CD4-positive, alpha-beta T cell (primary cell): ENCODE measurements at regions of chr20 and their contacts with region 1.

Region 1: DNA sequence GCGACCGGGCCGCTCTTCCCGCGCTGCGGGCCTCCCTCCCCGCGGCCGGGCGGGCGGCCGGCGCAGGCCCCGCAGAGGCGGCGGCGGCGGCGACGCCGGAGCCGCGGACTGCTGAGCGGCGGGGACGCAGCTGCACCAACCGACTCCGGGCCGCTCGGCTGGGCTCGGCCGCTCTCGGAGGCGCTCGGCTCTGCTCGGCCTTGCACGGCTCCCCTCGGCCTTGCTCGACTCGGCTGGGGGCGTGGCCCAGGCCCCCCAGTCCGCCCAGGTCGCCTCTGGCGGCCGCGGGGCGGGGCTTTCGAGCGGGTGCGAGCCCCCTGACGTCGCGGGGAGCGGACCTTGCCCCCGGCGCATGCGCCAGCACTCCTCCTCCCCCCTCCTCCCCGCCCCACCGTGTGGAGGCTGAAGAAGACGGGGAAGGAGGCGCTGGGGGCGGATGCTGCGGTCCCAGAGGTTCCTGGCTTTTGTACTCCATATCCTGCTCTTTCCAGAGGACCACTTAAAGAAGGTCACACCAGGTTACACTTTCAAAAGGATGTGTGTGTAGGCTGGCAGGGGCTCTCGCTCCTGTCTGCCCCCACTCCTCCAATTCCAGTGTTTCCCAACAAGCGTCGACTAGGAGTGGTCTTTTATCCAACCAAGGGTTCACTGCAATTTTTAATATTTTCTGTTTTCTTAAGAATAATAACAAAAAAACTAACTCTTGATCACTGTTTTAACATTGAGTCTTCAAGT is at the start of gene ZHX3:
- DNase-seq: peak; percentile 84 to 98 (median 96)
- ATAC-seq: peak; percentile 93
- H3K4me3 ChIP-seq: peak within 1 kb of the TSS; percentile 77
- H3K4me3 Mint-ChIP-seq: peak within 1 kb of the TSS; percentile 90
- H3K27ac ChIP-seq: peak within 1 kb of the TSS; percentile 38 to 57
- H3K27ac Mint-ChIP-seq: peak within 1 kb of the TSS; percentile 75
- H3K4me1 ChIP-seq: peaks cover 13% of the 10 kb centered on the region
- H3K4me1 Mint-ChIP-seq: peaks cover 38% of the 10 kb centered on the region
- H3K27me3 ChIP-seq: no peaks in the 10 kb centered on the region
- H3K27me3 Mint-ChIP-seq: no peaks in the 10 kb centered on the region
- CTCF ChIP-seq: no peak
- total RNA-seq, gene ZHX3: 6.6 to 7.6 TPM

Region 2: GRCh38 chr20:41136680-41137613 is 180.8 kb before region 1 on chr20 and contains the start of gene PLCG1:
- CTCF ChIA-PET with region 1: no interaction called
- POLR2A ChIA-PET with region 1: interaction called, 4 read pairs
- intact Hi-C with region 1: loop called in 1 of 2 experiments (anchors 1 kb)
- DNase-seq: peak; percentile 66 to 92 (median 82)
- ATAC-seq: peak; percentile 68
- H3K4me3 ChIP-seq: peak within 1 kb of the TSS; percentile 90
- H3K4me3 Mint-ChIP-seq: peak within 1 kb of the TSS; percentile 95
- H3K27ac ChIP-seq: peak within 1 kb of the TSS; percentile 75 to 83
- H3K27ac Mint-ChIP-seq: peak within 1 kb of the TSS; percentile 96
- H3K4me1 ChIP-seq: peaks cover 59% of the 10 kb centered on the region
- H3K4me1 Mint-ChIP-seq: peaks cover 69% of the 10 kb centered on the region
- H3K27me3 ChIP-seq: no peaks in the 10 kb centered on the region
- H3K27me3 Mint-ChIP-seq: no peaks in the 10 kb centered on the region
- CTCF ChIP-seq: no peak
- total RNA-seq, gene PLCG1: 387 to 404 TPM

Region 3: GRCh38 chr20:41232973-41233926 is 84.5 kb before region 1 on chr20:
- CTCF ChIA-PET with region 1: interaction called, 4 read pairs
- POLR2A ChIA-PET with region 1: interaction called, 3 read pairs
- intact Hi-C with region 1: loop called in 1 of 2 experiments (anchors 5 kb)
- DNase-seq: no peak
- ATAC-seq: no peak
- H3K4me3 ChIP-seq: no peak overlapping the region
- H3K4me3 Mint-ChIP-seq: no peak overlapping the region
- H3K27ac ChIP-seq: no peak overlapping the region
- H3K27ac Mint-ChIP-seq: no peak overlapping the region
- H3K4me1 ChIP-seq: peaks cover 11% of the 10 kb centered on the region
- H3K4me1 Mint-ChIP-seq: peaks cover 26% of the 10 kb centered on the region
- H3K27me3 ChIP-seq: no peaks in the 10 kb centered on the region
- H3K27me3 Mint-ChIP-seq: no peaks in the 10 kb centered on the region
- CTCF ChIP-seq: no peak

Region 4: GRCh38 chr20:41299899-41300298 is 17.8 kb before region 1 on chr20:
- CTCF ChIA-PET with region 1: no interaction called
- POLR2A ChIA-PET with region 1: no interaction called
- intact Hi-C with region 1: no loop called
- DNase-seq: no peak
- ATAC-seq: no peak
- H3K4me3 ChIP-seq: no peak overlapping the region
- H3K4me3 Mint-ChIP-seq: no peak overlapping the region
- H3K27ac ChIP-seq: no peak overlapping the region
- H3K27ac Mint-ChIP-seq: no peak overlapping the region
- H3K4me1 ChIP-seq: no peaks in the 10 kb centered on the region
- H3K4me1 Mint-ChIP-seq: no peaks in the 10 kb centered on the region
- H3K27me3 ChIP-seq: no peaks in the 10 kb centered on the region
- H3K27me3 Mint-ChIP-seq: no peaks in the 10 kb centered on the region
- CTCF ChIP-seq: no peak

Region 5: GRCh38 chr20:41339507-41340326 is 22.0 kb after region 1 on chr20:
- CTCF ChIA-PET with region 1: interaction called, 3 read pairs
- POLR2A ChIA-PET with region 1: no interaction called
- intact Hi-C with region 1: loop called in 1 of 2 experiments (anchors 2 kb)
- DNase-seq: peak; percentile 73 to 91 (median 83)
- ATAC-seq: peak; percentile 95
- H3K4me3 ChIP-seq: peak overlapping the region; percentile 31
- H3K4me3 Mint-ChIP-seq: peak overlapping the region; percentile 84
- H3K27ac ChIP-seq: no peak overlapping the region
- H3K27ac Mint-ChIP-seq: peak overlapping the region; percentile 10
- H3K4me1 ChIP-seq: peaks cover 14% of the 10 kb centered on the region
- H3K4me1 Mint-ChIP-seq: peaks cover 11% of the 10 kb centered on the region
- H3K27me3 ChIP-seq: no peaks in the 10 kb centered on the region
- H3K27me3 Mint-ChIP-seq: peaks cover 7% of the 10 kb centered on the region
- CTCF ChIP-seq: peak; percentile 100

Region 6: DNA sequence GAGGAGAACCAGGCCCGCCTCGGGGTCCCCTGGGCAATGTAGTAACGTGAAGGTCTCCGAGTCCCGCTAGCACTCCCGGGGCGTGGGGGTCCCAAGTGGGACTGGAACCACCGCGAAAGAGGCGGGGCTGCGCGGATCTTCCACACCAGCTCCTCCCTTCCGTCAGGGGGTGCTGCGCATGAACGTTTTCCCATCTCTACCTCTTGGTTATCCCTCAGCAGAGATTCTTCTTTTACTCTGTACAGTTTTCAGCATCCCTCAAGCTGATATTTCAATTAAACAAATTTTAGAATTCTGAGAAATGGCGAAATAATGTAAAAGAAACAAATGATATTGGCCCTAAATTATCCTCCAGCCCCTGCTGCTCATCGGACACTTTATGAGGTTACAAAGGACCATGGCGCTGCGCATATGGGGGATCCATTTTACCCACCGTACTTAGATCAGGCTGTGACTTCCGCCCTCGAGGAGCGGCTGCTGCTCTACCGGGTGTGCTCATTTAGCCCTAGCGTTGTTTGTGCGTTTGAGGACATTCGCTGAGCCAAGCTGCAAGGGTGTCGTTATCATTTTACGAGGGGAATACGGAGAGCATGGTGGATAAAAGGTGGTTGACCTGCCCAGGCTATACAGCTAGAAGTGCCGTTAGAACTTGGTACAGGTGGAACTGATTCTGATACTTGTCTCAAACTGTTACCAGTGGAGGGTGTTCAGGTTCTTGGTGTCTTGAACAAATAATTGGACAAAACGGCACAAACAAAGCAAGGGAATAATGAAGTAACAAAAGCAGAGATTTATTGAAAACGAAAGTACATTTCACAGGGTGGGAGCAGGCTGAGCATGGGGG is 375.7 kb after region 1 on chr20:
- CTCF ChIA-PET with region 1: no interaction called
- POLR2A ChIA-PET with region 1: interaction called, 3 read pairs
- intact Hi-C with region 1: loop called in 1 of 2 experiments (anchors 5 kb)
- DNase-seq: peak; percentile 67 to 93 (median 76)
- ATAC-seq: peak; percentile 86
- H3K4me3 ChIP-seq: peak overlapping the region; percentile 83
- H3K4me3 Mint-ChIP-seq: peak overlapping the region; percentile 90
- H3K27ac ChIP-seq: peak overlapping the region; percentile 76 to 87
- H3K27ac Mint-ChIP-seq: peak overlapping the region; percentile 87
- H3K4me1 ChIP-seq: peaks cover 14% of the 10 kb centered on the region
- H3K4me1 Mint-ChIP-seq: peaks cover 27% of the 10 kb centered on the region
- H3K27me3 ChIP-seq: peaks cover 0 to 3% of the 10 kb centered on the region in 2 experiments
- H3K27me3 Mint-ChIP-seq: peaks cover 5% of the 10 kb centered on the region
- CTCF ChIP-seq: peak; percentile 53